Activated naive CD4-positive, alpha-beta T cell treated with anti-CD3 and anti-CD28 coated beads for 36 hours (primary cell): ENCODE measurements at regions of chr11 and their contacts with region 1.

Region 1: GRCh38 chr11:110376711-110377324 is 52.9 kb upstream of the FDX1 start:
- DNase-seq: peak; percentile 47
- H3K4me3 Mint-ChIP-seq: no peak overlapping the region
- H3K27ac Mint-ChIP-seq: no peak overlapping the region
- H3K4me1 Mint-ChIP-seq: peaks cover 16% of the 10 kb centered on the region
- H3K27me3 Mint-ChIP-seq: peaks cover 6% of the 10 kb centered on the region

Region 2: GRCh38 chr11:110092515-110093404 is 284.1 kb before region 1 on chr11 and contains the start of gene ZC3H12C:
- CTCF ChIA-PET with region 1: no interaction called
- intact Hi-C with region 1: loop called (anchors 2 kb)
- DNase-seq: peak; percentile 73
- H3K4me3 Mint-ChIP-seq: peak within 1 kb of the TSS; percentile 78
- H3K27ac Mint-ChIP-seq: no peak within 1 kb of the TSS
- H3K4me1 Mint-ChIP-seq: peaks cover 11% of the 10 kb centered on the region
- H3K27me3 Mint-ChIP-seq: peaks cover 49% of the 10 kb centered on the region
- total RNA-seq, gene ZC3H12C: not detected

Region 3: DNA sequence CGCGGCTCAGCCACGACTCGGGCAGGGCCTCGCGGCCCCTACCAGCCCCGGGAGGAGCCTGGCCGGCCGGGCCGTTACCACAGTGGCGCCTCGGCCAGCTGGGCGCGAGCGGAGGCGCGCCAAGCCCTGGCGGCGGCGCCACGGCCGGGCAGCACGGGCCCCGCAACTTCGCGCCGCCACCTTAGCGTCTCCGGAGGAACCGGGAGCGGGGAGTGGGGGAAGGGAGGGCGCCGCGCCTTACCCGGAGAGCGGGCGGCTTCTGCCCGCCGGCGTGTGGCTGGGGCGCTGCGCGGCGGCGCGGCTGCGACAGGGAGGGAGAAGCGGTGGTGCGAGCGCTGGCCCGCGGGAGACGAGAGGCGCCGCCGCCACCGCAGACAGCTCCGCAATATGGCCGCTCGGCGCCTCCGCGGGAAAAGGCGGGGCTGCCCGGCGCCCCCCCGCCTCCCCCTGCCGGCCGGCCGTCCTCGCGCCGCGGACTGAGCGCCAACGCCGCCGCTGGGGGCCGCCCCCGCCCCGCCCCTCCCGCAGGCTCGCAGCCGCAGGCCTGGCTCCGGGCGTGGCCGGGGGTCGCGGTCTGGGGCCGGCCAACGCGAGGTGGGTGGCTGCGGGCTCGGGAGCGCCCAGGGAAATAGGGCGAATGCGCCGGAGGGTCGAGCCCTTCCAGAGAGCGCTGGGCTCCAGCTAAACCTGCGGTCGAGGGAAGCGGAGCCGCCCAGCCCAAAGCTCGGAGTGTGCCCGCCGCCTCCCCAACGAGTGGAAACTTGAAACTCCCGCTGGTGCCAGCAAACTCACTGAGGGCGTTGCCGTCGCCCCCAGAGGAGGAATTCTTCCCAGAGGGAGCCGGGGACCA is 80.4 kb before region 1 on chr11 and contains the start of gene RDX:
- CTCF ChIA-PET with region 1: no interaction called
- intact Hi-C with region 1: loop called (anchors 1 kb)
- DNase-seq: peak; percentile 53
- H3K4me3 Mint-ChIP-seq: peak within 1 kb of the TSS; percentile 91
- H3K27ac Mint-ChIP-seq: peak within 1 kb of the TSS; percentile 83
- H3K4me1 Mint-ChIP-seq: peaks cover 39% of the 10 kb centered on the region
- H3K27me3 Mint-ChIP-seq: no peaks in the 10 kb centered on the region
- total RNA-seq, gene RDX: 35.2 to 37.4 TPM

Region 4: GRCh38 chr11:110349138-110349996 is 27.5 kb before region 1 on chr11:
- CTCF ChIA-PET with region 1: interaction called, 5 read pairs
- intact Hi-C with region 1: loop called (anchors 1 kb)
- DNase-seq: peak; percentile 91
- H3K4me3 Mint-ChIP-seq: peak overlapping the region; percentile 14
- H3K27ac Mint-ChIP-seq: peak overlapping the region; percentile 97
- H3K4me1 Mint-ChIP-seq: peaks cover 67% of the 10 kb centered on the region
- H3K27me3 Mint-ChIP-seq: no peaks in the 10 kb centered on the region

Region 5: DNA sequence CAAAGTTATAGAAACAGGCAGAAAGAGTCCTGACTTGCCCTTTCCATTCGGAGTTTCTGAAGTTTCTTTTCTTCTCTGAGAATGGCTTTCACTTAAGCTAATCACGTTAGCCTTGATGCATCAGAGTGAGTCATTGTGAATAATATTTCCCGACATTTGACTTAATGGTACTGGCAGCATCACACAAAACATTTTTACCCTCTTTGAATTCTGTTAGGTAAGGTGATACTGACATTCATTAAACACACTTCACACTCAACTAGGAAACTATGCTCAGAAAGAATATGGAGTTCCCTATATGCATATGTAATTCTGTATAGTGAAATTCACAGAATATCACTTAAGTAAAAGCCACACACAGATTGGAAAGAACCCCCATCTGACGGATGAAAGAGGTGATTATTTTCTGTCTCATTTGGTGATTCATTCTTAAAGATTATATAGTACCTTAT is 456.2 kb after region 1 on chr11:
- CTCF ChIA-PET with region 1: no interaction called
- intact Hi-C with region 1: loop called (anchors 1 kb)
- DNase-seq: no peak
- H3K4me3 Mint-ChIP-seq: no peak overlapping the region
- H3K27ac Mint-ChIP-seq: peak overlapping the region; percentile 84
- H3K4me1 Mint-ChIP-seq: peaks cover 31% of the 10 kb centered on the region
- H3K27me3 Mint-ChIP-seq: no peaks in the 10 kb centered on the region